AG04449 (cell line): ENCODE measurements at regions of chr20 and their contacts with region 1.

Region 1: GRCh38 chr20:22691369-22692118 is 107.2 kb upstream of the FOXA2 start:
- DNase-seq: no peak
- H3K4me3 ChIP-seq: no peak overlapping the region
- CTCF ChIP-seq: peak; percentile 80

Region 2: DNA sequence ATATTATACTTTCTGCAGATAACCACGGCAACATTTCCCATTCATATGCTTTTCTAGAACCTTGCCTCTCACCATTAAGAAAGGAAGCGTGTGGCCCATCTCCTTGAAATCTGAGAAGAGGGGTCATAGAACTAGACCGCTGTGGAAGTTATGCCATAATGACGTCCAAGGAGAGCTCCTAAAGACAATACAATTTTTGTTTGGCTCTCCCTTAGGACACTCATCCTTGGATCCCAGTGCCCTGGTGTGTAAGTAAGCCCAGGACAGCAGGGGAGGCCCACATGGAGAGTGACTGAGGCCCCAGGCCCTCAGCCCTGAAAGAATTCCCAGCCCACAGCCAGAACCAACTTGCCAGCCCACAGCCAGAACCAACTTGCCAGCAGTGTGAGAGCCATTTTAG is 486.7 kb before region 1 on chr20:
- CTCF ChIA-PET with region 1: no interaction called
- POLR2A ChIA-PET with region 1: no interaction called
- DNase-seq: no peak
- H3K4me3 ChIP-seq: no peak overlapping the region
- CTCF ChIP-seq: no peak

Region 3: GRCh38 chr20:22974353-22974752 is 282.8 kb after region 1 on chr20:
- CTCF ChIA-PET with region 1: interaction called, 52 read pairs
- POLR2A ChIA-PET with region 1: no interaction called
- DNase-seq: no peak
- H3K4me3 ChIP-seq: no peak overlapping the region
- CTCF ChIP-seq: peak; percentile 46

Region 4: GRCh38 chr20:23235173-23236027 is 543.9 kb after region 1 on chr20:
- CTCF ChIA-PET with region 1: interaction called, 17 read pairs
- POLR2A ChIA-PET with region 1: no interaction called
- DNase-seq: no peak
- H3K4me3 ChIP-seq: no peak overlapping the region
- CTCF ChIP-seq: peak; percentile 75

Region 5: DNA sequence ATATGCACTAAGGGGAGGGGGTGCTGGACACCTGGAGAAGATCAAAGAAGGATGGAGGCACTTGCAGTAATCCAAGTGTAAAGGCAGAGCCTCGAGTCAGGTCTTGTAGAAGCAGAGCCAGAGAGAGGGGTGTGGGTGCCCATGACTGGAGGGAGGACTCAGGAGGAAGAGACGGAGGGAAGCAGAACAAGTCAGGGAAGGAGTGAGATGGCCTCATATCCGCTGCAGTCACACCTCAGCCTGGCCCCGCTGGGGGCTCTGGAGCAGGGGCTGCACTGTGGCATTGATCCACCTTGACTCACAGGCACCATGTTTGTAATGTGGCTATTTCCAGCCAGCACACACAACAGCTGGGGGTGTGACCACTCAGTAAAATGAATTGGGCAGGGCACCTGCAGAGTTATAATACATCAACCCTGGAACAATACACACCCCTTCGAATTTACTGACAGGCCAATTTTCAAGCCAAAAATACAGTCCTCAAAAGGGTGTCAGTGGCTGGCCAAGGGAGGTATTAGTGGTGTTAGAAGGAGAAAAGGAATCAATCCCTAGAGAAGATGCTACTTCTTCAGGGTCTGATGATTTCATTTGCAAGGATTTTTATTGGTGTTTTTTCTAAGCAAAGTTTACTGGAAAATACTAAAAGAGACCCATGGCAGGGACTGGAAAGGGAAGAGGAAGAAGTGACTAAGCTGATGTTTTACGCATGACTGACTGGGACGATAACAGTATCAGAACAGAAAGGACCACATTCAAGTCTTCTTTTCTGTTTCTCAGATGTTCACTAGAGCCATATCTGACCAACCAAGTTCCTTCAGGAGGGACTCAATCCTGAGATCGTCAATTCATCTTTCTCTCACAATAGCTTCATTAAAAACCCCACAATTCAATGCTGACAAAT is 640.2 kb after region 1 on chr20:
- CTCF ChIA-PET with region 1: interaction called, 245 read pairs
- POLR2A ChIA-PET with region 1: no interaction called
- DNase-seq: no peak
- H3K4me3 ChIP-seq: no peak overlapping the region
- CTCF ChIP-seq: no peak

Region 6: GRCh38 chr20:23350196-23350903 is 658.8 kb after region 1 on chr20 and contains the start of gene NXT1:
- CTCF ChIA-PET with region 1: interaction called, 245 read pairs
- POLR2A ChIA-PET with region 1: interaction called, 3 read pairs
- DNase-seq: peak; percentile 95
- H3K4me3 ChIP-seq: peak within 1 kb of the TSS; percentile 86
- CTCF ChIP-seq: peak; percentile 4